Dorsolateral prefrontal cortex (tissue), 120 donors: ENCODE measurements at regions of chrX and their contacts with region 1.

Region 1: DNA sequence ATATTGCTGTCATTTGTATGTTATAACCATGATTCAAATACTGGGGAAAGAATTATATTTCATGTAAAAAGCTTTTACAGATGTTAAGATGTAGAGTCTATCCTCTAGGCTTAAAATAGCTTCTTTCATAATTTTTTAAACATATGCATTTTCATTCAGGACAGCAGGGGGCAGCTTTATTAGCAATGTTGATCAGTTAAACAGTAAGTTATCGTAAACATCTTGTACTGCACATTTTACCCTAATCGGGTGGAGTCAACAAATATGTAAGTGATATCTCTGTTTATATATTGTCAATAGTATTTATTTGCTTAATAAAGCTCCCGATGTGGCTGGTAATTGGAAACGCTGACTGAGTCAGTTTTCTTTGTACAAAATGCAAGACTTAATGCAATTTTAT is 142.5 kb upstream of the MED14 start:
- DNase-seq: no peak
- H3K4me3 ChIP-seq: no peak overlapping the region
- H3K27ac ChIP-seq: no peak overlapping the region
- H3K27me3 ChIP-seq: peaks cover 0 to 80% (median 23%) of the 10 kb centered on the region in 45 donors
- CTCF ChIP-seq: peak in 54 of 56 donors; percentile 7 to 66 (median 44)

Region 2: DNA sequence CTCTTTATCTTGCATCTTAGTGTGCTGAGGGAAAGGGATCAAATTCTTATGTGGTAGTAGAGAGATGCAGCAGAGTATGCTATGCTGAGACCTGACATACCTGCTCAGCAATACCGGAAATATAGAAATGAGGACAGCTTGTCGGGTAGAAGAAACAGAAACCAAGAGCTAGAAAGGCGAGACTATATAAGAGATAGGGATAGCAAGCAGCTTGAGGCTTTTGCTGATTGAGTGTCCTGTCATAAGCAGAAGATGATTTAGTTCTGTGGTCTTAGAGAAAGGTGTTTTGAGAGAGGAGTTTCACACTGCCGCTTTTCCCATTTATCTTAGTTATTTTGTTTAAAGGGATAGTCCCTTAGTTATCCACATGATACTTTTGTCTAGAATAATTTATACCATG is 239.1 kb after region 1 on chrX:
- intact Hi-C with region 1: loop called (anchors 10 kb)
- DNase-seq: no peak
- H3K4me3 ChIP-seq: no peak overlapping the region
- H3K27ac ChIP-seq: no peak overlapping the region
- H3K27me3 ChIP-seq: no peaks in the 10 kb centered on the region
- CTCF ChIP-seq: no peak